ENCODE measurements at regions of chr1 and their contacts with region 1.

Region 1: DNA sequence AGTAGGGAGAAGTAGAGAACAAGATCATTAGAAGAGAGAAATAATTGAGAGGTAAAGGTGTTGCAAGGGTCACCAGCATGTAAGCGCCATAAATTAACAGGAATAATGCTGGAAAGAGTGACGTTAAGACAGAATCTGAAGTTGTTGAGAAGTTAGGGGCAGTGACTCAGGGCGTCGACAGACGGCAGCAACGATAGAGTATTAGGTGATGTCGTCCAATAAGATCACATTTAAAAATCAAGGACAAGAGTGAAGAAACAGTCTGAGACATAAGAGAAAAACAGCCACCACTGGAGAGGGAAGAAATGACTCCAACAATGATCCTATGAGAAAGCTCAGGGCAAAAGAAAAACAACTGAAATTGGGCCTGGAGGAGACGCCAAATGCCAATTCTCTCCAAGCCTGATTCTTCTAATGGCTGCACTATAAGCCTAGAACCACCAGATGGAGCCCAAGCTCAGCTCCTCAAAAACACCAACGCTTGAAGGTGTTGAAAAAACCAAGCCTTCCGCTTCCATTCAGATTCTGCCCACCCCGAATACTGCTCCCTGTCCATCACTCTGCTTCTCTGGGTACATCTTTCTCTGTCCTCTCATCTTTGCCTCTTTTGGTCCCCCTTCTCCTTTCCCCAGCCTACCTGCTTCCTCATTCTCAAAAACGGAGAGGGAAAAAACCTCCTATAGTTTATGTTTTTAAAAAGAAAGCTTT is 70.0 kb downstream of the LUZP1 start:
- DNase-seq: no peak
- ATAC-seq: peak; percentile 78
- H3K4me3 ChIP-seq: no peak overlapping the region
- H3K27ac ChIP-seq: no peak overlapping the region
- H3K4me1 ChIP-seq: no peaks in the 10 kb centered on the region
- H3K27me3 ChIP-seq: no peaks in the 10 kb centered on the region
- CTCF ChIP-seq: peak; percentile 88 to 98 (median 90)
- EP300 ChIP-seq: no peak
- POLR2A ChIP-seq: no peak
- RAD21 ChIP-seq: peak; percentile 98

Region 2: GRCh38 chr1:22976461-22977243 is 122.0 kb before region 1 on chr1:
- CTCF ChIA-PET with region 1: interaction called, 13 read pairs
- POLR2A ChIA-PET with region 1: interaction called, 3 read pairs
- RAD21 ChIA-PET with region 1: interaction called, 6 read pairs
- SMC1A ChIA-PET with region 1: interaction called, 5 read pairs
- in situ Hi-C with region 1: loop called (anchors 5 kb)
- intact Hi-C with region 1: loop called (anchors 1 kb)
- DNase-seq: peak; percentile 40
- ATAC-seq: peak; percentile 99
- H3K4me3 ChIP-seq: no peak overlapping the region
- H3K27ac ChIP-seq: no peak overlapping the region
- H3K4me1 ChIP-seq: no peaks in the 10 kb centered on the region
- H3K27me3 ChIP-seq: peaks cover 0 to under 1% of the 10 kb centered on the region in 2 experiments; a peak in 2 of 4 replicates
- CTCF ChIP-seq: peak; percentile 88 to 95 (median 90)
- EP300 ChIP-seq: no peak
- POLR2A ChIP-seq: no peak
- RAD21 ChIP-seq: peak; percentile 95

Region 3: DNA sequence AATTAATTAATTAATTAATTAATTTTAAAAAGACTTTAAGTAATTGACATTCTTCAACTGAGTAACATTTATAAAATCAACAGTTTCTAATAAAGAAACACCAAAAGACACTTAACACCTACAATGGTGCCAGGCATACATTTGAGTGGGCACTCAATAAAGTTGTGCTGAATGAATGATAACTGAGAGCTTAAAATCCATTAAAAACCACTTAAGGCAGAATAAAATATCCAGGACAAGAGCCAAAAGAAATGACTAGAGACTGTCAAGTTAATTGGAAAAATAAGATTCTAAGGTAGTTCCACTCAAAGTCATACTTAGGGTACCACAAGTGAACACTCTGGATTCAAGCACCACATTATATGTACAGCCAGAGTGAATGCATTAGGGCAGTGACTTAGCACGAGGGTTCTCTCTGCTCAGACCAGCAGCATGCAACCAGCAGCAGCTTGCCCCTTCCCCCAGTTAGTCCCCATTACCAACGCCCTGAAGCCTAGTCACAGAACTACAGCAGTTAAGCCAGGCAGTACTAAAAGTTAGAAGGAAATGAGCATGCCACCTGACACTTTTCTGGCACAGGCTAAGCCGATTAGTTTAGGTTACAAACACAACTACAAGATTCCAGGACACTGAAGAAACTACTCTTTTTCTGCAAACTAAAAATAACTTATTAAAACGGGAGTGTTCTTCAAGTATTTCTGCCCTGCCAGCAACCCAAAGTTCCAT is 23.6 kb after region 1 on chr1:
- CTCF ChIA-PET with region 1: interaction called, 93 read pairs
- POLR2A ChIA-PET with region 1: interaction called, 3 read pairs
- RAD21 ChIA-PET with region 1: interaction called, 13 read pairs
- SMC1A ChIA-PET with region 1: interaction called, 188 read pairs
- in situ Hi-C with region 1: no loop called
- intact Hi-C with region 1: no loop called
- DNase-seq: no peak
- ATAC-seq: peak; percentile 23; the same call in 2 of the 3 replicates
- H3K4me3 ChIP-seq: no peak overlapping the region
- H3K27ac ChIP-seq: no peak overlapping the region
- H3K4me1 ChIP-seq: peaks cover 29% of the 10 kb centered on the region
- H3K27me3 ChIP-seq: no peaks in the 10 kb centered on the region
- CTCF ChIP-seq: no peak
- EP300 ChIP-seq: no peak
- POLR2A ChIP-seq: no peak
- RAD21 ChIP-seq: no peak

Region 4: GRCh38 chr1:23149114-23149513 is 50.5 kb after region 1 on chr1:
- CTCF ChIA-PET with region 1: interaction called, 9 read pairs
- POLR2A ChIA-PET with region 1: no interaction called
- RAD21 ChIA-PET with region 1: interaction called, 8 read pairs
- SMC1A ChIA-PET with region 1: interaction called, 14 read pairs
- in situ Hi-C with region 1: no loop called
- intact Hi-C with region 1: no loop called
- DNase-seq: peak; percentile 34
- ATAC-seq: peak; percentile 94
- H3K4me3 ChIP-seq: no peak overlapping the region
- H3K27ac ChIP-seq: no peak overlapping the region
- H3K4me1 ChIP-seq: no peaks in the 10 kb centered on the region
- H3K27me3 ChIP-seq: no peaks in the 10 kb centered on the region
- CTCF ChIP-seq: no peak
- EP300 ChIP-seq: no peak
- POLR2A ChIP-seq: no peak
- RAD21 ChIP-seq: no peak

Region 5: GRCh38 chr1:23168457-23169194 is 70.0 kb after region 1 on chr1 and contains the start of gene LUZP1:
- CTCF ChIA-PET with region 1: interaction called, 961 read pairs
- POLR2A ChIA-PET with region 1: interaction called, 3 read pairs
- RAD21 ChIA-PET with region 1: interaction called, 13 read pairs
- SMC1A ChIA-PET with region 1: interaction called, 92 read pairs
- in situ Hi-C with region 1: no loop called
- intact Hi-C with region 1: no loop called
- DNase-seq: no peak
- ATAC-seq: peak; percentile 87
- H3K4me3 ChIP-seq: peak within 1 kb of the TSS; percentile 95
- H3K27ac ChIP-seq: peak within 1 kb of the TSS; percentile 50
- H3K4me1 ChIP-seq: peaks cover 7% of the 10 kb centered on the region
- H3K27me3 ChIP-seq: no peaks in the 10 kb centered on the region
- CTCF ChIP-seq: no peak
- EP300 ChIP-seq: no peak
- POLR2A ChIP-seq: peak; percentile 89
- RAD21 ChIP-seq: no peak
- polyA plus RNA-seq, gene LUZP1: 11.3 to 17.1 TPM

Region 6: GRCh38 chr1:23196639-23197328 is 98.2 kb after region 1 on chr1:
- CTCF ChIA-PET with region 1: interaction called, 961 read pairs
- POLR2A ChIA-PET with region 1: no interaction called
- RAD21 ChIA-PET with region 1: interaction called, 4 read pairs
- SMC1A ChIA-PET with region 1: interaction called, 5 read pairs
- in situ Hi-C with region 1: no loop called
- intact Hi-C with region 1: no loop called
- DNase-seq: no peak
- ATAC-seq: no peak
- H3K4me3 ChIP-seq: no peak overlapping the region
- H3K27ac ChIP-seq: no peak overlapping the region
- H3K4me1 ChIP-seq: peaks cover 3% of the 10 kb centered on the region; the same call in 1 of the 2 replicates
- H3K27me3 ChIP-seq: no peaks in the 10 kb centered on the region
- CTCF ChIP-seq: no peak
- EP300 ChIP-seq: no peak
- POLR2A ChIP-seq: no peak
- RAD21 ChIP-seq: no peak